ENCODE measurements at regions of chr6 and their contacts with region 1.

Region 1: DNA sequence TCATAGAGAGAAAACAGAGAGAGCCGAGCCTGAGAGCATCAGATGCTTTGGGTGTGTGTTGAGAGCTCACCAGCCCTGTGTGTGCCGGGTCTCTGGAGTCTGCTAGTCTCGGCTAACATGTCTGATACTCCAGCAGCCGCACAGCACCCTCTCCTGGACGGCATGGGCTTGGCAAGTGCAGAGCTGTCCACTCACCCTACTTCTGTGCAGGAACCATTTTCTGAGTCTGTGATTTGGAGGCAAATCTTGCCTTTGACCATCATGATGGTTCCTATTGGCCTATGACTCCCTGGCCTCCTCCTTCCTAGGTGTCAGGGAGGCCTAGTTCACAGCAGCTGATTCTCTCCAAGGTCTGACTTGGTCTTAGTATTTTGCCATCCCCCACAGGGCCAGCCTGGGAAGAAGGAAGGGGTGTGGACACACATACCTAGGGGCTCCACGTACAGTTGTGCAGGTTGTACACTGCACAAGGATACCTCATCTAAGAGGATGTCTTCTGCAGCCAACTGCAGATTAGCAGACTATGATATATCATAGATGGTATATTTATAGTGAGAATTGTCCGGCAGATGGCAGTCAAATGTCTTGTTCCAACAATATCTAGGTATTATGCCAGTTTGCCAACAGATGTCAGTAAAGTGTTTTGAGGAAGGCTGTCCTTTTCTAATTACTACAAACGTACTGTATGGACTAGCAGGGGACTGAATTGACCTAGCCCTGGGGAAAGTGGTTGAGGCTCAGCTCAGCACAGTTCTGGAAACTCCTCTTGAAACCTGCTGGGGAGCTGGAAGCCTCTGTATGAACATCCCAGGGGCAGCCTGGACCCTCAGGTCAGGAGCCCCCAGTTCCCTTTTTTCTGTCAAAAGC is 13.0 kb downstream of the FGD2 start:
- DNase-seq: peak; percentile 87
- H3K4me3 Mint-ChIP-seq: no peak overlapping the region
- H3K27ac Mint-ChIP-seq: peak overlapping the region; percentile 78
- H3K4me1 Mint-ChIP-seq: peaks cover 46% of the 10 kb centered on the region
- H3K27me3 Mint-ChIP-seq: no peaks in the 10 kb centered on the region

Region 2: DNA sequence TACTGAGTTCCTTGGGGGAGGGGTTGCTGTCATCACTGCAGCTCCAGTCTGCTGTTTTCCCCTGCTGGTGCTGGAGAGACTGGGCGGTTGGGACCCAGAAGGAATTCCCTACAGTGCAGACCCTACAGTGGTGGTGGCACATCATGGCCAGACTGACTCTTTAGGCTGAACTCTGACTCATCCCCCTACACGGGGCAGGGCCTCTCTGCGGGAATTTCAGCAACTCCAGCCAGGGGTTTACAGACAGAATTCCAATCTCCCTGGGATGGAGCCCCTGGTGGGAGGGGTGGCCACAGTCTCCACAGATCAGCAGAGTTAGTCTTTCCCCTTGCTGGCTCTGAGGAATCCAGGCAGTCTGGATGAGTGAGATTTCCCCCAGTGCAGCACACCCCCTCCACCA is 935.0 kb before region 1 on chr6:
- intact Hi-C with region 1: no loop called
- DNase-seq: no peak
- H3K4me3 Mint-ChIP-seq: no peak overlapping the region
- H3K27ac Mint-ChIP-seq: no peak overlapping the region
- H3K4me1 Mint-ChIP-seq: peaks cover 2% of the 10 kb centered on the region
- H3K27me3 Mint-ChIP-seq: no peaks in the 10 kb centered on the region

Region 3: GRCh38 chr6:36765594-36766398 is 252.6 kb before region 1 on chr6:
- intact Hi-C with region 1: loop called (anchors 1 kb)
- DNase-seq: peak; percentile 74
- H3K4me3 Mint-ChIP-seq: no peak overlapping the region
- H3K27ac Mint-ChIP-seq: peak overlapping the region; percentile 0
- H3K4me1 Mint-ChIP-seq: peaks cover 30% of the 10 kb centered on the region
- H3K27me3 Mint-ChIP-seq: no peaks in the 10 kb centered on the region

Region 4: DNA sequence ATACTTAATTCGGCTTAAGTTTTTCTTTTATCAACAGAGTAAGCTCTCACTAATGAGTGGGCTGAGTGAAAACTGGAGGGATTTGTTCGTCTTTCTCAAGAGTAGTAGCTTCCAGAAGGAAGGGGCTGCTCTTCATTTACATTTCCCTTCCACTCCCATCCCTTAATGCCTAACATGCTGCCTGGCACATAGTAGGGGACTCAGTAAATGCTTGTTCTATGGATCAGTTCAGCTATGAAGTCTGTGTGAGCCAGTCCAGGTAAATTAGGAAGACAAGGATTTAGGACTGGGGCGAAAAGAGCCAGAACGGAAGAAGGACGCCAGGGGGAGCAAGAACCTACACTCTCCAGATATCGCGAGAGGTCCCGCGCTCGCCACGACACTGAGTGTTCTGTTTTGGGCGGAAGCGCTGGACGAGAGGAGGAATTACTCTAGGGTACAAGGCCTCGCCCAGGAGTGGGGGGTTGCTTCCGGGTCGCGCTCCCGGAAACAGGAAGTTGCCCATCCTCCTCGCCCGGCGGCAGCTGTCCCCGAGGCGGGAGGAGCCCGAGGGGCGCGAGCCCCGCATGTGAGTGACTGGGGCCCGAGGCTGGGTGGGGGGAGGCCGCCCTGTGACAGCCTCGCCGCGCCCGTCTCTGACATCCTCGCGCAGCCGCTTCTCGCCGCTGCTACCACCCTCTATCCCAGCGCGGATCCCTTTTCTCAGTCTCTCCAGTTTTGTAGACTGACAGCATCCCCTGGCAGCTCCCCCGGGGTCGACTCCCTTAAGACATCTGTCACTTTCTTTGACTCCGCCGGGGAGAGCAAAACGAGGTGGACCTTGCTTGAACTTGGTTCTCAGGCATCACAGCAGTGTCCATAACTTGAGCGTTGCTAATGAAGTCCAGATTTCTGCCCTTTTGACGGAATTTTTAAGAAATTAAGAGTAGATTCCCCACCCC is 132.7 kb before region 1 on chr6 and contains the start of gene C6orf89:
- intact Hi-C with region 1: loop called (anchors 1 kb)
- DNase-seq: peak; percentile 95
- H3K4me3 Mint-ChIP-seq: peak within 1 kb of the TSS; percentile 87
- H3K27ac Mint-ChIP-seq: peak within 1 kb of the TSS; percentile 80
- H3K4me1 Mint-ChIP-seq: peaks cover 32% of the 10 kb centered on the region
- H3K27me3 Mint-ChIP-seq: no peaks in the 10 kb centered on the region
- total RNA-seq, gene C6orf89: 28.4 and 29.9 TPM in 2 replicates

Region 5: DNA sequence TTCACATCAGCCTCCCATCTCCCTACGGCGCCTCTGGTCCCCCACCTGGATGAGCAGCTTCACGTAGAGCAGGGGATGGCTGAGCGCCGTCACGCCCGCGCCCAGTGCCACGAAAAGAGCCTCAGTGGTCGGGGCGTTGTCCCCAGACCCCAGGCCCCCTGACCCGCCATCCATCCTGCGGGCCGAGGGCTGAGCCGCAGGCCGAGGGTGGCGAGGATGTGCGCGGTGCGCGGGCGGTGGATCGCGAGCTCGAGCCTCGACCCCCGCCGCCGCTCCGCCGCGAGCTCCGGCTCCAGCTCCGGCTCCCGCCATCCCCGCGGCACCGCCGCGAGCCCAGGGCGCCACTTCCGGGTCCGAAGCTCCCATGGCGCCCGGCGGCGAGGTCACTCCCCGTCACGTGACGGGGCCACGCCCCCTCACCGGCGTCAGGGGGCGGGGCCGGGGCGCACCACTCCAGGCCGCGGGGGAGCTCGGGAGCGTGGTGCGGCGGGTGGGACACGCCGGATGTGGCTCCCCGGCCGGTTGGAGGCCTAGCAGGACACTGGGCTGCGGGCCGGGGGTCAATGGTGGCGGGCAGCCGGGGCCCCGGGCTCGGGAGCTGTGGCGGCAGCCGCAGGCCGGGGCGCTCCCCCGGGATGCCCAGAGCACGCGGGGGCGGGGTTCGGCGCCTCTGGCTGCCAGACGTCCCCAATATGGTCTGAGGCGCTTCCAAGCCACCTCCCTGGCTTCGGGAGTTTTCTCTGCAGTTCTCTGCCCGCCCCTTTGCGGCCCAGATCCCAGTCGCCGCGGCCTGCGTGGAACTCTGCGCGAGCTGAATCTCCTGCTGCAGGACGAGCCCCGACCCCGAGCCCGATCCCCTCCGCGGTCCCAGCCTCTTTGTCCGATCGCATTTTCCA is 32.4 kb before region 1 on chr6 and contains the start of gene MTCH1:
- intact Hi-C with region 1: loop called (anchors 1 kb)
- DNase-seq: peak; percentile 86
- H3K4me3 Mint-ChIP-seq: peak within 1 kb of the TSS; percentile 98
- H3K27ac Mint-ChIP-seq: peak within 1 kb of the TSS; percentile 96
- H3K4me1 Mint-ChIP-seq: peaks cover 16% of the 10 kb centered on the region
- H3K27me3 Mint-ChIP-seq: peaks cover 7% of the 10 kb centered on the region
- total RNA-seq, gene MTCH1: 117 and 119 TPM in 2 replicates

Region 6: GRCh38 chr6:37103169-37104039 is 85.0 kb after region 1 on chr6:
- intact Hi-C with region 1: no loop called
- DNase-seq: no peak
- H3K4me3 Mint-ChIP-seq: peak overlapping the region; percentile 72
- H3K27ac Mint-ChIP-seq: peak overlapping the region; percentile 80
- H3K4me1 Mint-ChIP-seq: peaks cover 34% of the 10 kb centered on the region
- H3K27me3 Mint-ChIP-seq: no peaks in the 10 kb centered on the region

Region 7: DNA sequence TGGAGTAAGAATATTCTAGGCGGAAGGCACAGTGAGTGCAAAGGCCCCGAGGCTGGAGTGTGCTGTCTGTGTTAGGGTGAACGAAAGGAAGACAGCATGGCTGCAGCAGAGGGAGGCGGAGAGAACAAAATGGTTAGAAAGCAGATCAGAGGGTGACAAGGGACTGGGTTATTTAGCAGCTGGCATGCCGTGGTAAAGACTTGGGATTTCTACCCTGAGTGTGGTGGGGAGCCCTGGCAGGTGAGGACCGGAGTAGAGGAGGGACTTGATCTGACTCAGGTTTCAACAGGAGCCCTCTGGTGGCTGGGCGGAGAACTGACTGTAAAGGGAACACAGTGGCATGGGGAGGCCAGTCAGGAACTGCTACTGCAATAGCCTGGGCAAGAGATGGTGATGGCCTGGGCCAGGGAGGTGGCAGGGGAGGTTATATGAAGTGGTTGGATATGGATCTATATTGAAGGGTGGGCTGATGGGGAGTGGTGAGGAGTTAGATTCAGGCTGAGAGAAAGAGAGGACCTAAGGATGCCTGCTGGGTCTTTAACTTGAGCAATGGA is 189.5 kb after region 1 on chr6:
- intact Hi-C with region 1: loop called (anchors 1 kb)
- DNase-seq: peak; percentile 85
- H3K4me3 Mint-ChIP-seq: peak overlapping the region; percentile 15
- H3K27ac Mint-ChIP-seq: peak overlapping the region; percentile 76
- H3K4me1 Mint-ChIP-seq: peaks cover 57% of the 10 kb centered on the region
- H3K27me3 Mint-ChIP-seq: no peaks in the 10 kb centered on the region